SK-N-SH (cell line): ENCODE measurements at regions of chr5 and their contacts with region 1.

Region 1: DNA sequence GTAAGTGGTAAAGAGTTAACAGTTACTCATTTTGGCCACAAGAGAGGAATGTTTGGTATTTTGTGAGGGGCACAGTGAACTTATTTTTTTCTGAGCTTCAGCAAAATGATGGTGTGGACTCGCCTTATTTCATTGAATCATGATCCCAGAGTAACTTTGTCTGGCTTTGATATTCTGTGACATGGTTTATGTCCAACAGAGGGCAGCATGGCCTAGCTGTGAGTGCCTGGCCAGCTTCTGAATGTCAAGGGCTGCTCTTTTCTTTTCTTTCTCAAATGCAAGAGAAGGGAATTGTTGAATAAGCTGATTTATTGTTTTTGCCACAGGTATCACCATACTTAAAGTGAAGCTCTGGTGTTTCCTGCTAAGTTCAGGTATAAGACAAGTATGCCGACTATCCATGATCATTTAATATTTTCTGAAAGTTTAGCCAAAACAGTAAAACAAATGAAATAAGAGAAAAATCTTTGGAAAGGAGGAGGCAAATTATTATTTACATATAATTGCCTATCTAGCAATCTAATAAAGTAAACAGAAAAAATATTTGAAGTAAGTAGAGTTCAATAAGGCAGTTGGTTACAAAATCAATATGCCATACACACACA is 31.7 kb downstream of the MRPL22 start:
- DNase-seq: peak; percentile 49
- H3K4me3 ChIP-seq: no peak overlapping the region
- H3K27ac ChIP-seq: no peak overlapping the region
- H3K4me1 ChIP-seq: no peaks in the 10 kb centered on the region
- H3K27me3 ChIP-seq: no peaks in the 10 kb centered on the region
- CTCF ChIP-seq: peak; percentile 70
- EP300 ChIP-seq: no peak
- RAD21 ChIP-seq: peak; percentile 85

Region 2: GRCh38 chr5:154923441-154924430 is 48.8 kb before region 1 on chr5:
- CTCF ChIA-PET with region 1: no interaction called
- POLR2A ChIA-PET with region 1: no interaction called
- DNase-seq: no peak
- H3K4me3 ChIP-seq: no peak overlapping the region
- H3K27ac ChIP-seq: no peak overlapping the region
- H3K4me1 ChIP-seq: no peaks in the 10 kb centered on the region
- H3K27me3 ChIP-seq: no peaks in the 10 kb centered on the region
- CTCF ChIP-seq: no peak
- EP300 ChIP-seq: no peak
- RAD21 ChIP-seq: no peak

Region 3: DNA sequence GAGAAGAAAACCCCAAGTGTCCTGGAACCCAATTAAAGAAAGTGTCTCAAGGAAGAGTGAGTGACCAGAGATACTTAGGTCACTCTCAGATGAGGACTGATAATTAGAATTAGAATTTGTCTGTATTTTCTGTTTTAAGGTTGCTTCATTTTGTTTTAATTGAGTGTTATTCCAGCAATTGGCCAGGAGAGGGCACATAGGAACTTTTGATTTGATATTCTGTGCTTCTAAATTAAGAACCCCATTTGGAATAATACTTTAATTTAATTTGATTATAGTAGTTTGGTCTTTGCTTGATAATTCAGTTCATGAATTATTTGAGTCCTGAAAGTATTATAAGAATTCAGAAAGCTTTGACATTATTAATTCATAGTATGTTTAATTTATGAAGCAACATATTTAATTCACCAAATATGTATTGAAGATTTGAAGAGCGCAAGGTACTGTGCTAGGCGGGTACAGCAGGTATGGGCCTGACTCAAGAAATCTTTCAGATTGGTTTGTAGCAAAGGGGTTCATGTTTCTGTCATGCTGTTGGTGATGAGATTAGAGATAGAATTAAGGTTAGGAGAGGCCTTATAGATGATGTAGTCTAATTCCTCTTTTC is 26.8 kb before region 1 on chr5:
- CTCF ChIA-PET with region 1: interaction called, 10 read pairs
- POLR2A ChIA-PET with region 1: no interaction called
- DNase-seq: peak; percentile 31
- H3K4me3 ChIP-seq: no peak overlapping the region
- H3K27ac ChIP-seq: no peak overlapping the region
- H3K4me1 ChIP-seq: peaks cover 0 to 7% of the 10 kb centered on the region in 2 experiments; a peak in 1 of 4 replicates
- H3K27me3 ChIP-seq: no peaks in the 10 kb centered on the region
- CTCF ChIP-seq: peak; percentile 75
- EP300 ChIP-seq: no peak
- RAD21 ChIP-seq: peak; percentile 54; the same call in 1 of the 2 replicates

Region 4: DNA sequence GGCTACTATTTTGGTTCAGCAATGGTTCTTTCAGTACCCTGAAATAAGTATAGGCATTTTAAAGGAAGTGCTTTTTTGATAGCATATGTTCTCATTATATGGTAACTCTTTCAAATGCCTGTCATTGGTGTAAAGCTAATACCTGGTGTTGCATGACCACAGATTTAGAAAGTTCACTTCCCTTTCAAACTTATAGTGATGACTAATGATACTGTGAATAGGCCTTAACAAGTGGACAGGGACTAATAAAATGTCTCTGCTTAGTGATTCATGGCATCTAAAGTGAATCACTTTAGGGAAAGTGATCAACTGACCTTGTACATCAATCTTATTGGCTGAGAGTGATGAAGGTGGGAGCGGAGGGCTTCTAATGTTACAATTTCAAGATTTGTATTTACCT is 10.1 kb before region 1 on chr5:
- CTCF ChIA-PET with region 1: interaction called, 10 read pairs
- POLR2A ChIA-PET with region 1: no interaction called
- DNase-seq: no peak
- H3K4me3 ChIP-seq: no peak overlapping the region
- H3K27ac ChIP-seq: no peak overlapping the region
- H3K4me1 ChIP-seq: peaks cover 0 to 4% of the 10 kb centered on the region in 2 experiments; a peak in 1 of 4 replicates
- H3K27me3 ChIP-seq: no peaks in the 10 kb centered on the region
- CTCF ChIP-seq: no peak
- EP300 ChIP-seq: no peak
- RAD21 ChIP-seq: no peak

Region 5: DNA sequence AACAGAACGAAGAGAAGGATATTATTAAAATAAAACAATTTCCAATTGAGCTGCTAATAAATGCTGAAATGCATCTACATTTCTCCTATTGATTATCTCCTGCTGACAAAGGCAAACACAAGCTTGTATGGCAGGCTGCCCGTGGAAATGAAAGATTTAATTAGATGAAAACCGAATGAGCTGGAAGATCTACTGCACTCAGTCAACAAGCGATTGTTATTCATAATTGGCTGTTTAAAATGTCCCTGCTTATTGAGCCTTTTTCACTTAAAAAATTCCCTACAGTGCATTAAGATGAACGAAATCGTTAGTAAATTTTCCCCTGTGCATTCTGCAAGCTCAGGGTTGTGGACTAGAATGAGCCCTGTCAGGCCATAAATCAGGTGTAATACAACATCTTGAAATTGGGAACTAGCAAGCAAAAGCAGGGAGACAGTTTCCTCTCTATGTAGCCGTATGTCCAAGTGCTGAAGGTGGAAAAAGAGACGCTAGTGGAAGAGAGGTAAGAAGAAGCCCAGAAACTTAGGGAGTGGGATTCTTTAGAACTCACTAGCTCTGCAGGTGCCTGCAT is 12.5 kb after region 1 on chr5:
- CTCF ChIA-PET with region 1: interaction called, 27 read pairs
- POLR2A ChIA-PET with region 1: no interaction called
- DNase-seq: no peak
- H3K4me3 ChIP-seq: no peak overlapping the region
- H3K27ac ChIP-seq: no peak overlapping the region
- H3K4me1 ChIP-seq: no peaks in the 10 kb centered on the region; a peak in 1 of 4 replicates
- H3K27me3 ChIP-seq: no peaks in the 10 kb centered on the region
- CTCF ChIP-seq: no peak
- EP300 ChIP-seq: no peak
- RAD21 ChIP-seq: no peak

Region 6: GRCh38 chr5:154995679-154996078 is 23.1 kb after region 1 on chr5:
- CTCF ChIA-PET with region 1: interaction called, 27 read pairs
- POLR2A ChIA-PET with region 1: no interaction called
- DNase-seq: peak; percentile 39
- H3K4me3 ChIP-seq: no peak overlapping the region; a peak in 1 of 4 replicates
- H3K27ac ChIP-seq: no peak overlapping the region
- H3K4me1 ChIP-seq: no peaks in the 10 kb centered on the region
- H3K27me3 ChIP-seq: no peaks in the 10 kb centered on the region; the same call in 1 of the 2 replicates
- CTCF ChIP-seq: no peak
- EP300 ChIP-seq: no peak
- RAD21 ChIP-seq: 0 out of 2 replicates have a peak, but pooled peaks have one; percentile 17

Region 7: DNA sequence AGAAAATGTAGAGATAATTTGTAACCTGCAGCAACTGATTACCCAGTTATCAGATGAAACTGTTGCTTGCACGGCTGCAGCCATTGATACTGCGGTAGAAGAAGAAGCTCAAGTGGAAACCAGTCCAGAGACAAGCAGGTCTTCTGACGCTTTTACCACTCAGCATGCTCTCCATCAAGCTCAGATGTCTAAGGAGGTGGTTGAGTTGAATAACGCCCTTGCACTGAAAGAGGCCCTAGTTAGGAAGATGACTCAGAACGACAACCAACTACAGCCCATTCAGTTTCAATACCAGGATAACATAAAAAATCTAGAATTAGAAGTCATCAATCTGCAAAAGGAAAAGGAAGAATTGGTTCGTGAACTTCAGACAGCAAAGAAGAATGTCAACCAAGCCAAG is 42.7 kb after region 1 on chr5:
- CTCF ChIA-PET with region 1: no interaction called
- POLR2A ChIA-PET with region 1: no interaction called
- DNase-seq: no peak
- H3K4me3 ChIP-seq: no peak overlapping the region
- H3K27ac ChIP-seq: no peak overlapping the region
- H3K4me1 ChIP-seq: no peaks in the 10 kb centered on the region
- H3K27me3 ChIP-seq: no peaks in the 10 kb centered on the region
- CTCF ChIP-seq: no peak
- EP300 ChIP-seq: no peak
- RAD21 ChIP-seq: no peak

Region 8: DNA sequence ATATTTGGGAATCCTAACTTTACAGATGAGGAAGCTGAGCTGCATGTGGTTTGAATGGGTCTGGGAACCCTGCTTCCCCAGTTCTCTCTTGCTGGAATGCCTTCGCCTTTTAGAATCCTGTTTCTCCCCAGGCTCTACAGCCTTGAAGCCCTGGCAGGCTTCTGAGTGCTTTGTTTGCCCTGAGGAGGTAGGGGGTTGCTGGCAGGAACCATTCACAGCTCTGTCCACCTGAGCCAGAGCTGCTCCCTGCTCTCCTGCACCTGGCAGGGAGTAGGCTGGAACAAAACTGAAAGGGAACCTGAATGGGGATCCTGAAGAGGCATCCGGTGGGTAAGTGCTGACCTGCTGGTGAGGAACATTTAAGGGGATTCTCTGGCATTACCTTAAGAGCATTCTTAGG is 74.0 kb after region 1 on chr5:
- CTCF ChIA-PET with region 1: no interaction called
- POLR2A ChIA-PET with region 1: no interaction called
- DNase-seq: no peak
- H3K4me3 ChIP-seq: no peak overlapping the region
- H3K27ac ChIP-seq: no peak overlapping the region
- H3K4me1 ChIP-seq: no peaks in the 10 kb centered on the region
- H3K27me3 ChIP-seq: no peaks in the 10 kb centered on the region
- CTCF ChIP-seq: no peak
- EP300 ChIP-seq: no peak
- RAD21 ChIP-seq: no peak

Region 9: DNA sequence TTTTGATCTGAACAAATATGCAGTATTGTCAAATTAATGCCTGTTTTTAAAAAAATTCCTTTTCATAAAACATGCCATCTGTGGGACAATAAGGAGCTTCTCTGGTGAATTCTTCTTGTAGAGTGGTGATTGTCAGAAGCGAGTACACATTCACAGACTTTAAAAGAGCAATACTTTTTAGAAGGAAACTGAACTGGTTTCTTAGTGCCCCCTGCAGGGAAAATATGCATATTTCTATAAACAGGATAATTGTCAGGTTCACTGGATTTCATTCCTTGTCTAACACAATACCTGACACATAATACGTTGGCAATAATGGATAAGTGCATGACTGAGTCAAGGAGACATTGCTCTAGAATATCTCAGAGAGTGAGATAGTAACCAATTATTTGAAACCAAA is 174.6 kb after region 1 on chr5:
- CTCF ChIA-PET with region 1: interaction called, 52 read pairs
- POLR2A ChIA-PET with region 1: no interaction called
- DNase-seq: peak; percentile 25
- H3K4me3 ChIP-seq: no peak overlapping the region
- H3K27ac ChIP-seq: no peak overlapping the region
- H3K4me1 ChIP-seq: no peaks in the 10 kb centered on the region
- H3K27me3 ChIP-seq: no peaks in the 10 kb centered on the region
- CTCF ChIP-seq: peak; percentile 56
- EP300 ChIP-seq: no peak
- RAD21 ChIP-seq: peak; percentile 70

Region 10: DNA sequence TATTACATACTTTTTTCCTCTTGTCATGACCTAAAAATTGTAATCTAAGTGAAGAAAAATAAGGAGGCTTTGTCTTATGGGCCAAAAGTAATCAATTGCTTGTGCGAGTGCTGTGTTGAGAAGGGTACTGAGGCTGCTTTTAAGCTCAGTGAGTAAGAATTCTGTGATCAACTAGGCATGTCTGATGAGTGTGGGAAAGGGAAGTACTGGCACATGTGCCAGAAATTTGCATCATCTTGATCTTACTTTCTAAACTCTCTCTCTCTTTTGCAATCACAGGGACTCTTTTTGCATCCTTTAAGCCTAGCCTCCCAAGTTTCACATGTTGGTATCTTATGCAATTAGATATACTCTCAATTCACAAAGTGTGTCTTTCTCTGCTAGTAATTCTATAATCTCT is 370.9 kb after region 1 on chr5:
- CTCF ChIA-PET with region 1: no interaction called
- POLR2A ChIA-PET with region 1: no interaction called
- DNase-seq: no peak
- H3K4me3 ChIP-seq: no peak overlapping the region
- H3K27ac ChIP-seq: no peak overlapping the region
- H3K4me1 ChIP-seq: no peaks in the 10 kb centered on the region
- H3K27me3 ChIP-seq: no peaks in the 10 kb centered on the region
- CTCF ChIP-seq: no peak
- EP300 ChIP-seq: no peak
- RAD21 ChIP-seq: no peak